IMR-90 (cell line): ENCODE measurements at regions of chr18 and their contacts with region 1.

Region 1: DNA sequence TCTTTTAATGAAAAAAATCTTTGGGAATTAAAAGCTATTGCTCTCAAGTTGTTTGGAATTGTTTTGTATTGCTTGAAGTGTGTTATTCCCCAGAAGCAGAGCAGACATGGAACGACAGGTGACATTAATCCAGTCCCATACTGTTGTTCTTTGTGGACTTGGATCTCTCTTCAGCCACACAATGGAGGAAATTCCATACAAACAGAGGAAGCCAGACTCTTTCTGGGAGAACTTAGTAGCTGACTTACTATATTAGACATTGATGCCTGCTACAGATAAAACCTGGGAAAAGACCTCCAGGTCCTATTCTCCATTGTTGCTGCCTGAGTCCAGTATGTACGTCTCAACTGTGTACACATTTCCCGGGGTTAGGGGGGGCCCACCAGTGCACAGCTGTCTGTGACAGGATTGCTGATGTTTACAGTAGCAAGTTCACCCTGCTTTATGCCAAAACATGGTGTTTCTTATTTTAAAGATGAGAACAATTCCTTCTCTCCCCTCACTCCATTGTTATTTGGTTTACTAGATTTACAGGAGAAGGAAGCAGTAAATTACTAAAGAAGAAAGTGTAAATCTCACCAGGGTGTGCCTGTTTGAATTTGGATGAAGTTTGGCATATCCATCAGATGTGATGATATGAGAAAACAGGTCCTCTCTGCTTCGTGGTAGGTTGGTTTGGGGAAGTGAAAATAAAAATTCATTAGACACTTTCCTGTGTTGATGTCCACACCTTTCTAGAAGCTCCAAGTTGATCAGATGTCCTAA is 142.4 kb upstream of the RBBP8 start:
- DNase-seq: no peak
- ATAC-seq: no peak
- H3K4me3 ChIP-seq: no peak overlapping the region
- H3K27ac ChIP-seq: no peak overlapping the region
- H3K4me1 ChIP-seq: peaks cover 1% of the 10 kb centered on the region; the same call in 1 of the 2 replicates
- H3K27me3 ChIP-seq: peaks cover 4% of the 10 kb centered on the region
- CTCF ChIP-seq: no peak
- POLR2A ChIP-seq: no peak
- RAD21 ChIP-seq: no peak

Region 2: DNA sequence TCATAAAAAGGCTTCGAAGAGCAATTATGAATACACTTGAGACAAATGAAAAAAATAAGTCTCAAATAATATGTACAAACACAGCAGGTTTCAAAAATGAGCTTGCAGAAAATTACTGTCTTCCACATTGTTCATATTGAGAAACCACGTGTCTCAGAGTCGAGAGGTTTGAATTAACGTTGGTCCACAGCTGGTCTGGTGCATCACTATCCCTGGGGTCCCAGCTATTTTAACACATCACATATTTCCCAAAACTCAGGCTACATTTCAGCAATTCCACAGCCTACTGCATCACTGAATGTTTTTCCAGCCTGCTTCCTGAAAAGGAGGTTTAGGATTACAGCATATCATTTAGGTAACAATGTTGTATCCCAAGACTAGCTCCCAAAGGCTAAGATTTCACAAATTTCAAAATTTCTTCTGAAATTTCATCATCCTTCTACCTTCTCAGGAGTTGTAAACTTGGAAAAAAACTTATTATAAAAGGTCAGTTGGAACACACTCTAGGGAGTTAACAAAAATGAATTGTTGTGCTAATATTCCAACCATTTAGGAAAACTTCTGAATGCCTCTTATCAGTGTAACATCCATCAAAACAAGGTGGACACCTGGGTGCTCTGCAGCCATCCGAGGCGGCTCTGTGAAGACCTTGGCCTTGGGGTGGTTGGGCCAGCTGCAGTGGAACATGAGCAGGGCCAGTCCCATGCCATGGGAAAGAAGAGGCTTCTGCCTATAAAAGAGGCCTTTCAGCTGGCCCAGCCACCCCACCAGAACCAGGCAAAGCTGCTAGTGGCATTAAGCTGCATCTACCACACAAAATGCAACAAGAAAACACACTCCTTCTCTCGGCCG is 55.7 kb before region 1 on chr18:
- CTCF ChIA-PET with region 1: no interaction called
- POLR2A ChIA-PET with region 1: no interaction called
- dilution Hi-C with region 1: no loop called
- in situ Hi-C with region 1: no loop called
- intact Hi-C with region 1: loop called (anchors 10 kb)
- DNase-seq: peak; percentile 63
- ATAC-seq: peak; percentile 67
- H3K4me3 ChIP-seq: no peak overlapping the region
- H3K27ac ChIP-seq: peak overlapping the region; percentile 62; the same call in 1 of the 2 replicates
- H3K4me1 ChIP-seq: peaks cover 2% of the 10 kb centered on the region; the same call in 1 of the 2 replicates
- H3K27me3 ChIP-seq: peaks cover 7% of the 10 kb centered on the region; the same call in 1 of the 2 replicates
- CTCF ChIP-seq: no peak
- POLR2A ChIP-seq: no peak
- RAD21 ChIP-seq: no peak